PC-9 (cell line): ENCODE measurements at regions of chr1 and their contacts with region 1.

Region 1: DNA sequence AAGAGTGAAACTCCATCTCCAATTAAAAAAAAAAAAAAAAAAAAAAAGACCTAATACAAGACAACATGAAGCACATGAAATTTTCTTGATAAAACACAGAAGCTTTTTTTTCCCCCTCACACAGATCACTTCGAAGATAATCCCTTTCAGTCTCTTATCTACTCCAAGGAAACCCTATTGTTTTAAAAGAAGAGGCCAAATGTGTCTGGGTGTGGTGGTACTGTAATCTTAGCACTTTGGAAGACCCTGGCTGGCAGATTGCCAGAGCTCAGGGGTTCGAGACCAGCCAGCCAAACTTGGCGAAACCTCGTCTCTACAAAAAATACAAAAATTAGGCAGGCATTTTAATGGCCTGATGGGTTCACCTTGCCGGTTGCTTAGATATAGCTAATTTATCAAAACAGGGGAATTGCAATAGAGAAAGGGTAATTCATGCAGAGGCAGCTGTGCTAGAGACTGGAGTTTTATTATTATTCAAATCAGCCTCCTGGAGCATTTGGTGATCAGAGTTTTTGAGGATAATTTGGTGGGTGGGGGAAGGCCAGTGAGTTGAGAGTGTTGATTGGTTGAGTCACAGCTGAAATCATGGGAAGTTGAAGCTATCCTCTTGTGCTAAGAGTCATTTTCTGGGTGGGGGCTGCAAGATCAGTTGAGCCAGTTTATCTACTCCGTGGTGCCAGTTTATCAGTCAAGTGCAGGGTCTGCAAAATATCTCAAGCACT is 62.5 kb downstream of the SLC16A1 start:
- DNase-seq: no peak
- H3K4me3 ChIP-seq: no peak overlapping the region
- H3K27ac ChIP-seq: no peak overlapping the region
- H3K4me1 ChIP-seq: no peaks in the 10 kb centered on the region
- H3K27me3 ChIP-seq: no peaks in the 10 kb centered on the region
- CTCF ChIP-seq: no peak

Region 2: GRCh38 chr1:112925015-112925414 is 31.6 kb after region 1 on chr1:
- CTCF ChIA-PET with region 1: no interaction called
- POLR2A ChIA-PET with region 1: no interaction called
- intact Hi-C with region 1: no loop called
- DNase-seq: no peak
- H3K4me3 ChIP-seq: no peak overlapping the region
- H3K27ac ChIP-seq: no peak overlapping the region
- H3K4me1 ChIP-seq: peaks cover 18% of the 10 kb centered on the region
- H3K27me3 ChIP-seq: no peaks in the 10 kb centered on the region
- CTCF ChIP-seq: no peak; the same call in 1 of the 2 replicates

Region 3: GRCh38 chr1:113036639-113037321 is 143.3 kb after region 1 on chr1:
- CTCF ChIA-PET with region 1: interaction called, 15 read pairs
- POLR2A ChIA-PET with region 1: no interaction called
- intact Hi-C with region 1: no loop called
- DNase-seq: no peak
- H3K4me3 ChIP-seq: no peak overlapping the region
- H3K27ac ChIP-seq: no peak overlapping the region
- H3K4me1 ChIP-seq: peaks cover 24% of the 10 kb centered on the region
- H3K27me3 ChIP-seq: no peaks in the 10 kb centered on the region
- CTCF ChIP-seq: no peak